Posterior vena cava (tissue), 2 donors: ENCODE measurements at regions of chr12 and their contacts with region 1.

Region 1: GRCh38 chr12:50542448-50542847 is 37.7 kb downstream of the DIP2B start:
- DNase-seq: no peak

Region 2: GRCh38 chr12:50514526-50515276 is 27.7 kb before region 1 on chr12:
- intact Hi-C with region 1: loop called in 1 of 2 experiments (anchors 1 kb)
- DNase-seq: no peak

Region 3: DNA sequence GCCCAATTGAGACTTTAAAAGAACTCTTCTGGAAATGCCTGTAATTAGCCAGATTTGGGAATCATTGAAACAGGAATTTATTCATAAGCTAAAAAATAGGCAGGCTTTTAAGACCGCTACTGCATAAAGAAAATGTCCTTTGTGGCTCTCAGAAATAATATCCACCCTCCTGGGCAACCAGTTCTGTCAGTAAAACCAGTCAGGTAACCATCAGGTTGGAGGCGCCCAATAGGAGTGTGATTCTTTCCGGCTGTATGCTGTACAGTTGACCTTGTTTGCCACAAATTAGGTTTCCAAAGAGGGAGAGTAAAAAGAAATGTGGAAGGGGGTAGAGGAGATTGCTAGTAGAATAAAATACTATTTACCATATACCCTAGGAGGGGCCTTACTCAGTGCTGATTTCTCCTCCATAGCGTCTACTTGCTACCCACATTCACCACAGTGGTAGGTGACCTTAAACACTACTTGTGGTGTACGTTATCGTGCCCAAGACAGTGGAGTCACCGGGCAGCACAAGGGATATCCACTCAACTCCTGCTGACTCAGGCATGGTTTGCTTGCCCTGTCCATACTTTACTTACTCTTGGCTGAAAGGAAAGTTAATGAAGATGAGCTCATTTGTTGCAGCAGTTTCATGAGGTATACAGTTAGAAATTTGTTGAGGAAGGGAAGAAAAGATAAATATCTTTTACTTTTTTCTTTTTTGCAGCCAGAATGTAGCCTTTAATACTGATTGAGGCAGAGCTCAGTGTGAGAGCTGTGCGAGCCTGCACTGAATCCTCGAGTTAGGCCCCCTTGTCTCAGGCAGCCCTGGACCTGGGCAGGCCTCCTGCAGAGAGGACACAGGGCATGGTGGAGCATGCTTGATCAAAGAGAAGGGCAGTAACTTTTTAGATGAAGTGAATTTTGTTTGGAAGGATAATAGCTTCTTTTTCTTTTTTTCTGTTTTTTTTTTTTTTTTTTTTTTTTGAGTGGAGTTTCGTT is 39.0 kb after region 1 on chr12:
- intact Hi-C with region 1: no loop called
- DNase-seq: no peak